ENCODE measurements at regions of chrX and their contacts with region 1.

Region 1: DNA sequence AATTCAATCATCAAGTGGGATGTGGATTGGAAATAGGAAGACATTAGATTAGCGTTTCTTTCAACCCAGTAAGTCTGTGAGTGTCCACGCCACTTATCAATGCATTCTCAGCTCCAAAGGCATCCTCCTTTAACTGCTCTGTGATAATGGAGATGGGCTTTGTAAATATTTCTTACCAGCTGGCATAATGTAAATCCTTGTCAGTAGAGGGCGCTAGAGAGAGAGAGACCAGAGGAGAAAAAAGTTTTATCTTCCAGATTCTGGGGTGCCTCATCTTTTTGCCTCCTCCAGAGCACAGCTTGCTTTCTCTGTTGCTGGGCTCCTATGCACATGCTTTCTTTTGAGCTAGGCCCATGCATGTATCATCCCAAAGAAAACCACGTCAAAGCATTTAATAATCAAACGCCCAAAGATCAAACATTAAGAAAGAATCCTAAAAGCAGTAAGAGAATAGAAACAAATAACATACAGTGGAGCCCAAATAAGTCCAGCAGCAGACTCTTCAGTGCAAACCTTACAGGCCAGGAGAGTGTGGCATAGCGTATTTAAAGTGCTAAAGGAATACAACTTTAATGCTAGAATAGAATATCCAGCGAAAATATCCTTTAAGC is 9.6 kb upstream of the MTMR1 start:
- DNase-seq: peak; percentile 35 to 50
- ATAC-seq: peak; percentile 51 to 76; a peak in 4 of 6 replicates
- H3K4me3 ChIP-seq: no peak overlapping the region
- H3K27ac ChIP-seq: no peak overlapping the region
- H3K4me1 ChIP-seq: peaks cover 1% of the 10 kb centered on the region; the same call in 2 of the 3 replicates
- CTCF ChIP-seq: peak; percentile 59
- EP300 ChIP-seq: no peak
- POLR2A ChIP-seq: no peak
- RAD21 ChIP-seq: peak; percentile 27 to 44; a peak in 3 of 5 replicates

Region 2: GRCh38 chrX:150704030-150704613 is 20.5 kb after region 1 on chrX:
- CTCF ChIA-PET with region 1: interaction called, 19 read pairs
- POLR2A ChIA-PET with region 1: no interaction called
- DNase-seq: no peak
- ATAC-seq: no peak
- H3K4me3 ChIP-seq: no peak overlapping the region
- H3K27ac ChIP-seq: no peak overlapping the region
- H3K4me1 ChIP-seq: no peaks in the 10 kb centered on the region
- CTCF ChIP-seq: no peak
- EP300 ChIP-seq: no peak
- POLR2A ChIP-seq: no peak
- RAD21 ChIP-seq: no peak

Region 3: GRCh38 chrX:150715184-150715583 is 31.5 kb after region 1 on chrX:
- CTCF ChIA-PET with region 1: interaction called, 32 read pairs
- POLR2A ChIA-PET with region 1: no interaction called
- DNase-seq: no peak
- ATAC-seq: no peak
- H3K4me3 ChIP-seq: no peak overlapping the region
- H3K27ac ChIP-seq: no peak overlapping the region
- H3K4me1 ChIP-seq: 0 out of 3 replicates have a peak, but pooled peaks cover 6% of the 10 kb centered on the region
- CTCF ChIP-seq: no peak
- EP300 ChIP-seq: no peak
- POLR2A ChIP-seq: no peak
- RAD21 ChIP-seq: no peak